Breast epithelium (tissue), 4 donors: ENCODE measurements at regions of chr20 and their contacts with region 1.

Region 1: GRCh38 chr20:43178080-43178479 is 11.6 kb downstream of the PTPRT start:
- DNase-seq: no peak
- H3K4me3 ChIP-seq: no peak overlapping the region
- H3K27ac ChIP-seq: no peak overlapping the region
- H3K4me1 ChIP-seq: no peaks in the 10 kb centered on the region
- H3K27me3 ChIP-seq: no peaks in the 10 kb centered on the region
- CTCF ChIP-seq: no peak
- POLR2A ChIP-seq: no peak

Region 2: GRCh38 chr20:42352096-42352495 is 826.0 kb before region 1 on chr20:
- intact Hi-C with region 1: loop called (anchors 5 kb)
- DNase-seq: no peak
- H3K4me3 ChIP-seq: no peak overlapping the region
- H3K27ac ChIP-seq: no peak overlapping the region
- H3K4me1 ChIP-seq: no peaks in the 10 kb centered on the region
- H3K27me3 ChIP-seq: no peaks in the 10 kb centered on the region
- CTCF ChIP-seq: no peak
- POLR2A ChIP-seq: no peak

Region 3: DNA sequence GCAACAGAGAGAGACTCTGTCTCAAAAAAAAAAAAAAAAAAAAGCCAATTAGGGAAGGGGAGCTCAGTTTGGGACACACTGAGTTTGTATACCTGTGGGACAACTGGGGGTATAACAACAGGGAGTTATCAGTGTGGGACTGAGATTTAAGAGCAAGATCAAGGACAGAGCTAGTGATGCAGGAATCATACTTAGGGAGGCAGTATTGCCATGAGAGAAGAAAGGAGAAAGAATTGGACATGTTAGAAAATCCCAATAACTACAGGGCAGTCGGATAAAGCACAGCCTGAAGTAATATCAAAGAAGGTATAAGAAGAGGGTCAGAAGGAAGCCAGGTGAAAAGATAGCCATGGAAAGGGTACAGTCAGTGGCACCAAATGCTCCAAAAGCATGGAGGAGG is 109.6 kb before region 1 on chr20:
- intact Hi-C with region 1: no loop called
- DNase-seq: no peak
- H3K4me3 ChIP-seq: no peak overlapping the region
- H3K27ac ChIP-seq: no peak overlapping the region
- H3K4me1 ChIP-seq: no peaks in the 10 kb centered on the region
- H3K27me3 ChIP-seq: no peaks in the 10 kb centered on the region
- CTCF ChIP-seq: no peak
- POLR2A ChIP-seq: no peak

Region 4: GRCh38 chr20:43102394-43102793 is 75.7 kb before region 1 on chr20:
- intact Hi-C with region 1: no loop called
- DNase-seq: no peak
- H3K4me3 ChIP-seq: no peak overlapping the region
- H3K27ac ChIP-seq: no peak overlapping the region
- H3K4me1 ChIP-seq: no peaks in the 10 kb centered on the region
- H3K27me3 ChIP-seq: no peaks in the 10 kb centered on the region
- CTCF ChIP-seq: no peak
- POLR2A ChIP-seq: no peak

Region 5: DNA sequence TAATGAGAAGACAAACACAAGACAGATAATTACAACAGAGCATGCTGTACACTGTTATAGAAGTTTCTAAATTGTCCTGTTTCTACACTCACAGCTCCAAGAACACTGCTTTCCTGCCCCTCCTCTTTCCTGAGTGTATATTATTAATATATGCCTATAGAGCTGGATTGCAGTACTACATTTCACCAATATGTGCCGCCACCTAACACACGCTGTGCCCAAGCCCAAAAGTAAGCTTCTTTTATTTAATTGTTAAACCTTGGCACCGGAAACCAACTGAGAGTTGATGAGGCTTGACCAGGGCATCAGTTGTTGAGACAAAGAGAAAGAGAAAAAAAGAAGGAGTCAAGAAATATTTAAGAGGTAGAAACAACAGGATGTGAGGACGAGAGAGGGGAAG is 27.6 kb after region 1 on chr20:
- intact Hi-C with region 1: no loop called
- DNase-seq: no peak
- H3K4me3 ChIP-seq: no peak overlapping the region
- H3K27ac ChIP-seq: no peak overlapping the region
- H3K4me1 ChIP-seq: no peaks in the 10 kb centered on the region
- H3K27me3 ChIP-seq: peaks cover 0 to 8% of the 10 kb centered on the region in 2 donors
- CTCF ChIP-seq: no peak
- POLR2A ChIP-seq: no peak

Region 6: DNA sequence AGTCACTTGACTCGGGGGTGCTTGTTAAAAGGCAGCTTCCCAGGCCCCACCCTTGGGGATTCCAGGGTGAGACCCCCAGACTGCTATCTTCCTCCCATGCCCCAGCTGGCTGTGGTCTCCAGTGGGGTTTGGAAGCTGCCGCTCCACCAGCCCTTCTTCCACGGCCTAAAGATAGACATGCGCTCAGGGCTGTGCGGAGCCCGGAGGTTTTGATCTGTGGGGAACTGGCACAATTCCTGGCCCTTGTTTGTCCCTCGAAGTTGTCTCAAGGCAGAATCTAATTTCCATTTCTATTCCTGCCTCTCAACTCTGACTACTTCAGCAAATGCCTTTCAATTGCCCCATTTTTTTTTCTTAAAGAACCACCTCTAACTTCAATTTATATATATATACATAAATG is 159.0 kb after region 1 on chr20:
- intact Hi-C with region 1: no loop called
- DNase-seq: no peak
- H3K4me3 ChIP-seq: no peak overlapping the region
- H3K27ac ChIP-seq: no peak overlapping the region
- H3K4me1 ChIP-seq: no peaks in the 10 kb centered on the region
- H3K27me3 ChIP-seq: no peaks in the 10 kb centered on the region
- CTCF ChIP-seq: no peak
- POLR2A ChIP-seq: no peak